CD8-positive, alpha-beta T cell (primary cell): ENCODE measurements at regions of chr1 and their contacts with region 1.

Region 1: DNA sequence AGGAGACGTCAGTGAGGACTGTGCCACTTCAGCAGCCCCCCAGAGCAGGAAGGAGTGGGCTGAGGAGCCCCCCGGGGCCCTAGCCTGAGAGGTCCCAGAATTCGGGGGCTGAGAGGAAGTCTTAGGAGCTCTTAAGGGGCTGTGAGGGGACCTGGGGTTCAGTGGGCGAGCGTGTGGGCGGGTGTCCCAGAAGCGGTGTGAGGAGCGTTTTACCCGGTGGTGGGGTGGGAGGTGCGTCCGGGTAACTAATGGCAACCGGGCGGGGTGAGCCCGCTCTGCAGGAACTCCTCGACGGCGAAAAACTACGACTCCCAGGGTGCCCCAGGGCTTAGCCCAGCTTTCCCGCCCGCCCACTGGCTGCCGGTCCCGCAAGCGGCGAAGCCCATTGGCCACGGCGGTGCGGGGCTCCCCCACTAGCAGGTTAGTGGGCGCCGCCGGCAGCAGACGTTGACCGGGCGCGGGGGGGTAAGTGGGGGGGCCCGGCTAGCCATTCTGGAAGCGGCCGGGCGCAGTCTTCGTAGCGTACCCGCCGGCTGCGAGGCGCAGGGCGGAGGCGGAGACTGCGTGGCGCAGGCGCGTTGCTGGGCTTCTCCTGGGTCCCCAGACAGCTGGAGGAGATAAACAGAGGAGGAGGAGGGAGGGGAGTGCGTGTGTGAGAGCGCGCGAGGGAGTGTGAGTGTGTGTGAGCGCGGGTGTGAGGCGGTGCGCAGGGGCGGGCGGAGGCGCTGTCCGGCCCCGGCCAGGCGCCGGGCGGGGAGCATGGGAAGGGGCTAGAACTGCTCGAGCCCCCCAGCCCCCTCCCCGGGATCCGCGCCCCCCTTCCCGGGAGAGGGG is at the start of gene WDTC1:
- DNase-seq: peak; percentile 97 to 99 (median 98)
- ATAC-seq: peak; percentile 90
- H3K4me3 ChIP-seq: peak within 1 kb of the TSS; percentile 58 to 66
- H3K4me3 Mint-ChIP-seq: peak within 1 kb of the TSS; percentile 99
- H3K27ac ChIP-seq: peak within 1 kb of the TSS; percentile 74 to 93
- H3K27ac Mint-ChIP-seq: peak within 1 kb of the TSS; percentile 95
- H3K4me1 ChIP-seq: peaks cover 25% of the 10 kb centered on the region
- H3K4me1 Mint-ChIP-seq: peaks cover 37% of the 10 kb centered on the region
- H3K27me3 ChIP-seq: no peaks in the 10 kb centered on the region
- H3K27me3 Mint-ChIP-seq: no peaks in the 10 kb centered on the region
- CTCF ChIP-seq: no peak
- total RNA-seq, gene WDTC1: 17.8 to 18.1 TPM

Region 2: DNA sequence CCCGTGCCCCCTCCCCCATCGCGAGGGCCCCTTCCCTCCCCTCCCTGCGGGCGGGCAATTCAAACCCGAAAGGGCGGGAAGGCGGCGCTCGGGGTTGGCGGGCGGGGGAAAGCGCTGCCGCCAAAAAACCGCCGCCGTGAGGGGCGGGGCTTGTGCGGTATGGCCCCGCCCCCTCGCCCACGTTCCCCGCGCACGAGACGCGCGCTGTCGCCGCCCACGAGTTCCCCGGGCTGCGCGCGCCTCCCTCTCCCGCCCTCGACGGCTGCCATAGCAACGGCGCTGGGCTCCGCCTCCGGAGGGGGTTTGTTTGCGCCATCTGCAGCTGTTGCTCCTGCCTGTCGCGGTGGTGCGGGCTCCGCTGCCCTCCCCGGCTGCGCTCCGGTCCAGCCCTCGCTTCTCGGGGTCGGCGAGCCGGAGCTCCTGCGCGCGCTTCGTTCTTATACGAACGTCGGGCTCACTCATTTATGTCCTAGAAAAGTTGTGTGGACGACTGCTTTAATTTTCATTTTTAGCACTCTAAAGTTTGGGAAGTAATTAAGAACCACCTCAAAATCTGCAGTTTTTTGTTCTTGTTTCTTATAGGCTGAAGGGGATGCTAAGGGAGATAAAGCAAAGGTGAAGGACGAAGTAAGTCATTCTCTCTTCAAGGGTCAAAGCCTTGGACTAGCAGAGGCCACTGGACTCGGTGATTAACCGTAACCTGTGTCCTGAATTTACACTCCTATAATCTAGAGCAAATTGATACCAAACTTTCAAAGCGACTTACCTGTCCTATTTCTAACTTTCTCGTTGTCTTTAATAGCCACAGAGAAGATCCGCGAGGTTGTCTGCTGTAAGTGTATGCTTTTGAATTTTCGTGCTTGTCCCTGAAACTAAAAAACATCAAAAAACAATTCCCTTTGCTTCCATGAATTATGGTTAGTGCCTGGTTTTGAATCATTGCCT is 761.1 kb before region 1 on chr1:
- CTCF ChIA-PET with region 1: no interaction called
- POLR2A ChIA-PET with region 1: no interaction called
- intact Hi-C with region 1: loop called in 1 of 2 experiments (anchors 10 kb)
- DNase-seq: peak; percentile 94 to 99 (median 98)
- ATAC-seq: peak; percentile 86
- H3K4me3 ChIP-seq: peak overlapping the region; percentile 48 to 72
- H3K4me3 Mint-ChIP-seq: peak overlapping the region; percentile 85
- H3K27ac ChIP-seq: peak overlapping the region; percentile 93 to 94
- H3K27ac Mint-ChIP-seq: peak overlapping the region; percentile 78
- H3K4me1 ChIP-seq: peaks cover 32% of the 10 kb centered on the region
- H3K4me1 Mint-ChIP-seq: peaks cover 51% of the 10 kb centered on the region
- H3K27me3 ChIP-seq: no peaks in the 10 kb centered on the region
- H3K27me3 Mint-ChIP-seq: no peaks in the 10 kb centered on the region
- CTCF ChIP-seq: no peak

Region 3: GRCh38 chr1:27154991-27155781 is 79.1 kb before region 1 on chr1 and contains the start of gene SLC9A1:
- CTCF ChIA-PET with region 1: no interaction called
- POLR2A ChIA-PET with region 1: interaction called, 9 read pairs
- intact Hi-C with region 1: loop called (anchors 1 kb)
- DNase-seq: peak; percentile 88 to 96 (median 91)
- ATAC-seq: peak; percentile 94
- H3K4me3 ChIP-seq: peak within 1 kb of the TSS; percentile 75 to 83
- H3K4me3 Mint-ChIP-seq: peak within 1 kb of the TSS; percentile 81
- H3K27ac ChIP-seq: peak within 1 kb of the TSS; percentile 92 to 100
- H3K27ac Mint-ChIP-seq: peak within 1 kb of the TSS; percentile 99
- H3K4me1 ChIP-seq: peaks cover 40% of the 10 kb centered on the region
- H3K4me1 Mint-ChIP-seq: peaks cover 45% of the 10 kb centered on the region
- H3K27me3 ChIP-seq: no peaks in the 10 kb centered on the region
- H3K27me3 Mint-ChIP-seq: no peaks in the 10 kb centered on the region
- CTCF ChIP-seq: peak; percentile 82
- total RNA-seq, gene SLC9A1: 17.9 to 18.3 TPM

Region 4: GRCh38 chr1:27341525-27342252 is 107.4 kb after region 1 on chr1 and contains the start of gene SYTL1:
- CTCF ChIA-PET with region 1: no interaction called
- POLR2A ChIA-PET with region 1: no interaction called
- intact Hi-C with region 1: loop called in 1 of 2 experiments (anchors 5 kb)
- DNase-seq: peak; percentile 38 to 84 (median 72)
- ATAC-seq: peak; percentile 64
- H3K4me3 ChIP-seq: peak within 1 kb of the TSS; percentile 85 to 91
- H3K4me3 Mint-ChIP-seq: peak within 1 kb of the TSS; percentile 97
- H3K27ac ChIP-seq: peak within 1 kb of the TSS; percentile 69 to 86
- H3K27ac Mint-ChIP-seq: peak within 1 kb of the TSS; percentile 93
- H3K4me1 ChIP-seq: peaks cover 38% of the 10 kb centered on the region
- H3K4me1 Mint-ChIP-seq: peaks cover 55% of the 10 kb centered on the region
- H3K27me3 ChIP-seq: no peaks in the 10 kb centered on the region
- H3K27me3 Mint-ChIP-seq: no peaks in the 10 kb centered on the region
- CTCF ChIP-seq: no peak
- total RNA-seq, gene SYTL1: 103 to 113 TPM

Region 5: GRCh38 chr1:27671964-27672749 is 437.9 kb after region 1 on chr1 and contains the start of gene IFI6:
- CTCF ChIA-PET with region 1: no interaction called
- POLR2A ChIA-PET with region 1: no interaction called
- intact Hi-C with region 1: loop called (anchors 1 to 10 kb)
- DNase-seq: peak; percentile 47 to 94 (median 80)
- ATAC-seq: peak; percentile 92
- H3K4me3 ChIP-seq: peak within 1 kb of the TSS; percentile 48 to 71
- H3K4me3 Mint-ChIP-seq: peak within 1 kb of the TSS; percentile 92
- H3K27ac ChIP-seq: peak within 1 kb of the TSS; percentile 62 to 87
- H3K27ac Mint-ChIP-seq: peak within 1 kb of the TSS; percentile 98
- H3K4me1 ChIP-seq: peaks cover 35% of the 10 kb centered on the region
- H3K4me1 Mint-ChIP-seq: peaks cover 42% of the 10 kb centered on the region
- H3K27me3 ChIP-seq: no peaks in the 10 kb centered on the region
- H3K27me3 Mint-ChIP-seq: no peaks in the 10 kb centered on the region
- CTCF ChIP-seq: peak; percentile 28
- total RNA-seq, gene IFI6: 24.8 to 25.1 TPM